ENCODE measurements at regions of chr5 and their contacts with region 1.

Region 1: GRCh38 chr5:56070851-56071465 is 76.2 kb upstream of the IL6ST start:
- DNase-seq: peak in 7 of 9 donors; percentile 46 to 79 (median 69)
- ATAC-seq: peak; percentile 91
- H3K4me3 ChIP-seq: peak overlapping the region; percentile 31
- H3K4me3 Mint-ChIP-seq: peak overlapping the region; percentile 54 to 91 (median 78)
- H3K27ac ChIP-seq: peak overlapping the region; percentile 77
- H3K27ac Mint-ChIP-seq: peak overlapping the region; percentile 65 to 99 (median 91)
- H3K4me1 ChIP-seq: peaks cover 7 to 72% of the 10 kb centered on the region in 2 donors
- H3K4me1 Mint-ChIP-seq: peaks cover 41 to 95% (median 80%) of the 10 kb centered on the region in 7 donors
- H3K27me3 ChIP-seq: no peaks in the 10 kb centered on the region
- H3K27me3 Mint-ChIP-seq: peaks cover 0 to 3% (median 0%) of the 10 kb centered on the region in 5 donors

Region 2: GRCh38 chr5:54533541-54534190 is 1537.3 kb before region 1 on chr5:
- CTCF ChIA-PET with region 1: no interaction called
- POLR2A ChIA-PET with region 1: no interaction called
- intact Hi-C with region 1: no loop called
- DNase-seq: no peak
- ATAC-seq: no peak
- H3K4me3 ChIP-seq: no peak overlapping the region
- H3K4me3 Mint-ChIP-seq: peak overlapping the region in 2 of 10 donors; percentile 17 to 19
- H3K27ac ChIP-seq: no peak overlapping the region
- H3K27ac Mint-ChIP-seq: peak overlapping the region in 3 of 9 donors; percentile 0 to 54 (median 39)
- H3K4me1 ChIP-seq: peaks cover 3 to 15% of the 10 kb centered on the region in 2 donors
- H3K4me1 Mint-ChIP-seq: peaks cover 35 to 66% (median 53%) of the 10 kb centered on the region in 7 donors
- H3K27me3 ChIP-seq: no peaks in the 10 kb centered on the region
- H3K27me3 Mint-ChIP-seq: no peaks in the 10 kb centered on the region

Region 3: GRCh38 chr5:56012281-56012963 is 58.5 kb before region 1 on chr5:
- CTCF ChIA-PET with region 1: no interaction called
- POLR2A ChIA-PET with region 1: interaction called, 5 read pairs
- intact Hi-C with region 1: loop called in 1 of 2 experiments (anchors 2 kb)
- DNase-seq: peak in 7 of 9 donors; percentile 51 to 84 (median 75)
- ATAC-seq: peak; percentile 91
- H3K4me3 ChIP-seq: no peak overlapping the region
- H3K4me3 Mint-ChIP-seq: peak overlapping the region; percentile 13 to 84 (median 66)
- H3K27ac ChIP-seq: peak overlapping the region; percentile 57
- H3K27ac Mint-ChIP-seq: peak overlapping the region; percentile 71 to 96 (median 89)
- H3K4me1 ChIP-seq: peaks cover 26% of the 10 kb centered on the region in 2 donors
- H3K4me1 Mint-ChIP-seq: peaks cover 26 to 52% (median 49%) of the 10 kb centered on the region in 7 donors
- H3K27me3 ChIP-seq: no peaks in the 10 kb centered on the region
- H3K27me3 Mint-ChIP-seq: no peaks in the 10 kb centered on the region

Region 4: DNA sequence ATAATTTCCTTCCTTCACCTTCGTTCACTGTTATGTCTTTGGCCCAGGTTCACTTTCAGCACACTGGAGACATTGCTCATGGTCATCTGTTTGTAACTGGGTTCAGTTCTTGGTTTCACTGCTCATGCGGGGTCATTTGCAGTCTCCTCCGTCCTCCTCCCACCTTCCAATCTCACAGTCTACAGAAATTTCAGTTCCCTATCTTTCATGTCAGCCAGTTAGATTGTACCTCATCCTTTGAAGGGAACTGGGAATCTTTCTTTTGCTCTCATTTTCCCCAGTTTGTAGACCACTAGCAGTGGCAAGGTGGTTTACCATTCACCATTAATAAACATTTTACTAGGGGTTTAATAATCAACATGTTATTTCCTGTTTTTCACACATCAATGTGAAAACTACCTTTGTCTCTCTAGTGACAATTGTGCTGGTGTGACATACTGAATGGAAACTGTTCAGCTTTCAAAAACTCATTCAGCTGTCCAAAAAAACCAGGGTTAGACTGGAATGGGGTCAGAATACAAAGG is 24.7 kb after region 1 on chr5:
- CTCF ChIA-PET with region 1: interaction called, 5 read pairs
- POLR2A ChIA-PET with region 1: interaction called, 38 read pairs
- intact Hi-C with region 1: loop called in 1 of 2 experiments (anchors 1 kb)
- DNase-seq: no peak
- ATAC-seq: no peak
- H3K4me3 ChIP-seq: no peak overlapping the region
- H3K4me3 Mint-ChIP-seq: peak overlapping the region in 9 of 10 donors; percentile 32 to 77 (median 56)
- H3K27ac ChIP-seq: peak overlapping the region; percentile 54
- H3K27ac Mint-ChIP-seq: peak overlapping the region; percentile 66 to 100 (median 91)
- H3K4me1 ChIP-seq: peaks cover 0 to 94% of the 10 kb centered on the region in 2 donors
- H3K4me1 Mint-ChIP-seq: peaks cover 56 to 97% (median 86%) of the 10 kb centered on the region in 7 donors
- H3K27me3 ChIP-seq: no peaks in the 10 kb centered on the region
- H3K27me3 Mint-ChIP-seq: no peaks in the 10 kb centered on the region

Region 5: DNA sequence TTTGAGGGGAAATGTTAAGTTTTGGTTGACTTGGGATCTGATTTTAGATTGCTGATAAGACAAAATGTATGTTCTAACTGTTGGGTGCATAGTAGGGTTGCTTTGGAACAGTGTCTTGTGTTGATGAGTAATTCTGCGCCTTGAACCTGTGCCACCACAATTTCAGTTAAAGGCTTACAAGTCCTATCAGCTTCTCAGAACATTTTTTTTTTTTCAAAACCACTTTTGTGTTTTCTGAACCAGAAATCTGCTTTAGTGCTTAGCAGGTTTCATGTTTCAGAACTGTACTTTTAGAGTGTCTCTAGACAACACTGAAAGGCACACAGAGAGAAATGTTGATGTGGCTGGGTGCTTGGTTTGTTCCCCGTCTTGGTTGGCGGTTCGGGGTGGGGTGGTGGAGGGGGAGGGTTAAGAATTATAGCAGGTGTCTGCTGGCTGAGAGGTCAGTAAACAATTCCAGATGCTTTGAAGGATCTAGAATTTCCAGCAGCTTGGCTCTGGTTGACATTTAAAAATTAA is 77.6 kb after region 1 on chr5:
- CTCF ChIA-PET with region 1: no interaction called
- POLR2A ChIA-PET with region 1: interaction called, 5 read pairs
- intact Hi-C with region 1: loop called (anchors 1 to 5 kb)
- DNase-seq: peak in 8 of 9 donors; percentile 52 to 84 (median 70)
- ATAC-seq: peak; percentile 87
- H3K4me3 ChIP-seq: peak overlapping the region; percentile 18
- H3K4me3 Mint-ChIP-seq: peak overlapping the region; percentile 45 to 74 (median 62)
- H3K27ac ChIP-seq: peak overlapping the region; percentile 61
- H3K27ac Mint-ChIP-seq: peak overlapping the region; percentile 87 to 97 (median 94)
- H3K4me1 ChIP-seq: peaks cover 0 to 76% of the 10 kb centered on the region in 2 donors
- H3K4me1 Mint-ChIP-seq: peaks cover 39 to 76% (median 70%) of the 10 kb centered on the region in 7 donors
- H3K27me3 ChIP-seq: no peaks in the 10 kb centered on the region
- H3K27me3 Mint-ChIP-seq: peaks cover 0 to 2% (median 0%) of the 10 kb centered on the region in 5 donors

Measured in naive thymus-derived CD4-positive, alpha-beta T cell (primary cell).